HCT116 (cell line): ENCODE measurements at regions of chr12 and their contacts with region 1.

Region 1: GRCh38 chr12:65602610-65603295 is 221.5 kb upstream of the HMGA2 start:
- DNase-seq: peak; percentile 94
- ATAC-seq: peak; percentile 84
- H3K4me3 ChIP-seq: peak overlapping the region; percentile 45 to 54
- H3K27ac ChIP-seq: peak overlapping the region; percentile 94
- H3K4me1 ChIP-seq: peaks cover 59 to 80% of the 10 kb centered on the region in 2 experiments
- H3K27me3 ChIP-seq: no peaks in the 10 kb centered on the region
- CTCF ChIP-seq: peak; percentile 78 to 86 (median 85)
- POLR2A ChIP-seq: no peak
- RAD21 ChIP-seq: peak; percentile 93

Region 2: GRCh38 chr12:65313719-65314317 is 288.9 kb before region 1 on chr12:
- CTCF ChIA-PET with region 1: interaction called, 5 read pairs
- POLR2A ChIA-PET with region 1: interaction called, 5 read pairs
- RAD21 ChIA-PET with region 1: no interaction called
- intact Hi-C with region 1: loop called (anchors 5 kb)
- DNase-seq: peak; percentile 33
- ATAC-seq: peak; percentile 58; the same call in 1 of the 2 replicates
- H3K4me3 ChIP-seq: no peak overlapping the region; a peak in 1 of 4 replicates
- H3K27ac ChIP-seq: peak overlapping the region; percentile 95; the same call in 1 of the 2 replicates
- H3K4me1 ChIP-seq: peaks cover 41 to 91% of the 10 kb centered on the region in 2 experiments
- H3K27me3 ChIP-seq: no peaks in the 10 kb centered on the region
- CTCF ChIP-seq: peak; percentile 45 to 78 (median 73); a peak in 5 of 6 replicates
- POLR2A ChIP-seq: no peak
- RAD21 ChIP-seq: peak; percentile 94

Region 3: DNA sequence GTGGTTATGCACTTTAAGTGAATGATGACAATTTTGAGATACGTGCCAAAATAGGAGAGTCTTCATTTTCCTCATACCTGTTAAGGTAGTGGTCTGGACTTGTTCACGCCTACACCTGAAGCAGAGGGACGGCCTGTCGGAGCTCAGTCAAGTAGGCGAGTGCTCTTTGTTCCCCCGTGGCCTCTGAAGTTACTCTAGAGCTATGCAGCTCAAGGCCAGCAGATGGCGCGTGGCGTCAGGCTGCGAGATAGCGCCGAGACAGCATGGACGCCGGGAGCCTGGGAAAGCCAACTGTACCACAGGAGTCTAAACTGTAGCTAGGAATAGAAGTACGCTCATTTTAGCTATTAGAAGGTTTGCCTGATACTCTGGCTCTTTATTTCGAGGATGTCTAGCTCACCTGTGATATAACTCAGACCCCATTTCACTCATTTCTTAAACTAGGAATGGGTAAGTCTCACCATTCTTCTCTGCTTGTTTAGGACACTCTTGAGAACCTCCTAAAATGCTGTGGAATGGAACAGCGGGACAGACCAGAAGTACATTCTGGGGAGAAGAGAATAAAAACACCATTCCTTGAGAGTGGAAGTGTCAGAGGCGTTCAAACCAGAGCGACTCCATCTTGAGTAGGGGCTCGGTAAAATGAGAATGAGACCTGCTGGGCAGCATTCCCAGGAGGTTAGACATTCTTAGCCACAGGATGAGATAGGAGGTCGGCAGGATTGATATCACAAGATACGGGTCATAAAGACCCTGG is 45.9 kb before region 1 on chr12:
- CTCF ChIA-PET with region 1: interaction called, 12 read pairs
- POLR2A ChIA-PET with region 1: interaction called, 3 read pairs
- RAD21 ChIA-PET with region 1: interaction called in 1 of 2 experiments, 6 read pairs
- intact Hi-C with region 1: no loop called
- DNase-seq: peak; percentile 80
- ATAC-seq: peak; percentile 98
- H3K4me3 ChIP-seq: no peak overlapping the region
- H3K27ac ChIP-seq: peak overlapping the region; percentile 53
- H3K4me1 ChIP-seq: peaks cover 7 to 45% of the 10 kb centered on the region in 2 experiments; a peak in 3 of 4 replicates
- H3K27me3 ChIP-seq: no peaks in the 10 kb centered on the region
- CTCF ChIP-seq: peak; percentile 67 to 94 (median 85); a peak in 5 of 6 replicates
- POLR2A ChIP-seq: no peak
- RAD21 ChIP-seq: peak; percentile 94

Region 4: DNA sequence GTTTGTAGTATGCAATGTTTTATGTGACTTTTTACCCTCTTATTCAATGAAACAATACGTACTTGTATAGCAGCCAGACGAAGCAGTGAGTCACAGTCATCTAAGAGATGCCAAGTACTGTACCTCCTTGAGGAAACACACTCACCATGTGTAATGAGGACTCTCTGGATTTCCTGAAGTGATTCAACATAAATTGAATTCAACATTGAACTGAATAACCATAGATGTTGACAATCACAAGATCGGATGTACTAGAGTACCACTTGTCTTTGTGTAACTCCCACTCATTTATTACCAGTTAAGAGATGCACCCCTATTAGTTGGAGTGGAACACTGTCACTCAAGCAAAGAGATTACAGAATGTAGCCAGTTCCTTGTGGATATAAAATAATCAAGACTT is 46.4 kb after region 1 on chr12:
- CTCF ChIA-PET with region 1: interaction called, 4 read pairs
- POLR2A ChIA-PET with region 1: interaction called, 13 read pairs
- RAD21 ChIA-PET with region 1: interaction called, 3 read pairs
- intact Hi-C with region 1: loop called (anchors 2 kb)
- DNase-seq: peak; percentile 98
- ATAC-seq: peak; percentile 94
- H3K4me3 ChIP-seq: no peak overlapping the region
- H3K27ac ChIP-seq: peak overlapping the region; percentile 100
- H3K4me1 ChIP-seq: peaks cover 30 to 55% of the 10 kb centered on the region in 2 experiments
- H3K27me3 ChIP-seq: no peaks in the 10 kb centered on the region
- CTCF ChIP-seq: no peak
- POLR2A ChIP-seq: no peak
- RAD21 ChIP-seq: 0 out of 2 replicates have a peak, but pooled peaks have one; percentile 47

Region 5: GRCh38 chr12:65695113-65695865 is 92.5 kb after region 1 on chr12:
- CTCF ChIA-PET with region 1: interaction called, 5 read pairs
- POLR2A ChIA-PET with region 1: no interaction called
- RAD21 ChIA-PET with region 1: no interaction called
- intact Hi-C with region 1: loop called (anchors 2 kb)
- DNase-seq: peak; percentile 93
- ATAC-seq: peak; percentile 88
- H3K4me3 ChIP-seq: 0 out of 4 replicates have a peak overlapping the region, but pooled peaks of 1 of the 2 experiments have one; percentile 9
- H3K27ac ChIP-seq: peak overlapping the region; percentile 84
- H3K4me1 ChIP-seq: peaks cover 62 to 66% of the 10 kb centered on the region in 2 experiments
- H3K27me3 ChIP-seq: no peaks in the 10 kb centered on the region
- CTCF ChIP-seq: no peak
- POLR2A ChIP-seq: no peak
- RAD21 ChIP-seq: peak; percentile 30

Region 6: GRCh38 chr12:65823513-65824375 is 221.0 kb after region 1 on chr12:
- CTCF ChIA-PET with region 1: interaction called, 6 read pairs
- POLR2A ChIA-PET with region 1: interaction called, 17 read pairs
- RAD21 ChIA-PET with region 1: no interaction called
- intact Hi-C with region 1: loop called (anchors 1 kb)
- DNase-seq: peak; percentile 74
- ATAC-seq: peak; percentile 65
- H3K4me3 ChIP-seq: peak overlapping the region; percentile 83 to 85
- H3K27ac ChIP-seq: peak overlapping the region; percentile 100
- H3K4me1 ChIP-seq: peaks cover 54 to 81% of the 10 kb centered on the region in 2 experiments
- H3K27me3 ChIP-seq: no peaks in the 10 kb centered on the region
- CTCF ChIP-seq: no peak
- POLR2A ChIP-seq: peak; percentile 63
- RAD21 ChIP-seq: no peak

Region 7: GRCh38 chr12:65986047-65986446 is 383.3 kb after region 1 on chr12:
- CTCF ChIA-PET with region 1: no interaction called
- POLR2A ChIA-PET with region 1: no interaction called
- RAD21 ChIA-PET with region 1: no interaction called
- intact Hi-C with region 1: loop called (anchors 1 kb)
- DNase-seq: no peak
- ATAC-seq: no peak
- H3K4me3 ChIP-seq: no peak overlapping the region
- H3K27ac ChIP-seq: no peak overlapping the region
- H3K4me1 ChIP-seq: no peaks in the 10 kb centered on the region
- H3K27me3 ChIP-seq: no peaks in the 10 kb centered on the region
- CTCF ChIP-seq: no peak
- POLR2A ChIP-seq: no peak
- RAD21 ChIP-seq: peak; percentile 32; the same call in 1 of the 2 replicates